ENCODE measurements at regions of chr1 and their contacts with region 1.

Region 1: DNA sequence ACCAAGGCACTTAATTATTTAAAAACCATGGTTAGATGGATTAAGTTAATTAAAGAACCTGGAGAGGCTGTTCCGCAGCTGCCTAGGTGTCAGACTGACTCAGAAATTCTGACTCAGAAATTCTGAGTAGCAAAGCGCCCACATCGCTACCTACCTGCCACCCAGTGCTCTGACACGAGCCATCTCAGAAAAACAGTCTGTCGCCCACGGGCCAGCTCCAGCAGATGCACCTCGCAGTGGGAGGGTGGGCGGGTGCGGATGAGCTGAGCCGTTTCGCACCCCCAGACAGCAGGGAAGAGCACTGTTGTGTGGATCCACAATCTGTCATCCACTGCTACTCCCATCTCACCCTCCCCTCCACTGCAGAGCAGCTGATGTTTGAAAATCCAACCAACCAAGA is 13.5 kb downstream of the KCNK1 start:
- DNase-seq: peak; percentile 51
- H3K27ac ChIP-seq: no peak overlapping the region
- CTCF ChIP-seq: no peak

Region 2: DNA sequence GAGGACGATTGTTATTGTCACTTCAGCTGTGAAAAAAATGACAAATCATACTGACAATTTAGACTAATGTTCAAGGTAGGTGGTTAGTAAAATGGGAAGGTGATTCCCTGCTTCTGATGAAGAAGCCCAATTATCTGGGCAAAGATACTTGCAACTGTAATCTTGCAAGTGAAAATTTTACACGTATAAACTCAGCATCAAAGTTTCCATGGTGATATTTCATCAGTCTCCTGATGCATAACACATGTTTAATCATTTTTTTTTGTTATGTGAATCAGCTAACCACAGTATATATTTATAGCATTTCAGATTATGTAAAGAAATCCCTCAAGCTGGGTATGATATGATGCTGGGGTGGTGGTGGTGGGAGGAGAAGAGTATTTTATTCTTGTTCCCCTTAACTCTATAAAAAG is 29.9 kb before region 1 on chr1:
- CTCF ChIA-PET with region 1: no interaction called
- POLR2A ChIA-PET with region 1: interaction called, 10 read pairs
- DNase-seq: no peak
- H3K27ac ChIP-seq: no peak overlapping the region
- CTCF ChIP-seq: no peak